Natural killer cell (primary cell): ENCODE measurements at regions of chr12 and their contacts with region 1.

Region 1: DNA sequence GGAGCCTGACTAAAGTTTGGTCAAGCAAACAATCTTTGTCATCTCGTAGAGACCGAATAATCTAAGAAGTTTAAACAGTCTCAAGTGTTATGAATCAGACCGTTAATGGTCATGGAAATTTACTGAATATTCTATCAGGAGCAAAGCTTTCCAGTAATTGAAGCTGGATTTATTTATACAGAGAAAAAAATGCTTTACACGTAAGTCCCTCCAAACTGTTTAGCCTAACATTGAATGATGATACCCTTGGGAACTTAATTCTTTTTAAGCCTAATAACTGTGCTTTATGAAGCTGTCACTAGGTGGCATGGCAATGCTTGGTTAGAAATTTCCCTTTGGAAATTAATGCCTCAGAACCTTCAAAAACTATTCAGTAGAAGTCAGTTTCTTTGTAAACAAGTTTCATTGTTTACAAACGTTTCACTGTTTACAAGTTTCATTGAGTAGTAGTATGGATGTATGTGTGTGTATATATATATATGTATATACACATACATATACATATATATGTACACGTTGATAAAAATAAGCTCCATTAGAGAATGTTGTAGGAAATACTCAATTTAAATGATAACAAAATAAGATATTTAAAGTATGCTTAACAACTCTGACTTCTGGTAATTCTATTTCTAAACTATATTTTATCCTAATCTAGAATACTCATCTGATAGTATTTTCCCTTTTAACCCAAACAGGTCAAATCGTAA is 32.1 kb downstream of the DEPDC4 start:
- DNase-seq: peak in 1 of 2 donors; percentile 58
- ATAC-seq: peak; percentile 36 to 52 (median 43)
- H3K4me3 ChIP-seq: no peak overlapping the region
- H3K4me3 Mint-ChIP-seq: no peak overlapping the region
- H3K27ac ChIP-seq: no peak overlapping the region
- H3K27ac Mint-ChIP-seq: no peak overlapping the region
- H3K4me1 ChIP-seq: no peaks in the 10 kb centered on the region
- H3K4me1 Mint-ChIP-seq: no peaks in the 10 kb centered on the region
- H3K27me3 ChIP-seq: no peaks in the 10 kb centered on the region
- H3K27me3 Mint-ChIP-seq: no peaks in the 10 kb centered on the region
- CTCF ChIP-seq: peak; percentile 75

Region 2: DNA sequence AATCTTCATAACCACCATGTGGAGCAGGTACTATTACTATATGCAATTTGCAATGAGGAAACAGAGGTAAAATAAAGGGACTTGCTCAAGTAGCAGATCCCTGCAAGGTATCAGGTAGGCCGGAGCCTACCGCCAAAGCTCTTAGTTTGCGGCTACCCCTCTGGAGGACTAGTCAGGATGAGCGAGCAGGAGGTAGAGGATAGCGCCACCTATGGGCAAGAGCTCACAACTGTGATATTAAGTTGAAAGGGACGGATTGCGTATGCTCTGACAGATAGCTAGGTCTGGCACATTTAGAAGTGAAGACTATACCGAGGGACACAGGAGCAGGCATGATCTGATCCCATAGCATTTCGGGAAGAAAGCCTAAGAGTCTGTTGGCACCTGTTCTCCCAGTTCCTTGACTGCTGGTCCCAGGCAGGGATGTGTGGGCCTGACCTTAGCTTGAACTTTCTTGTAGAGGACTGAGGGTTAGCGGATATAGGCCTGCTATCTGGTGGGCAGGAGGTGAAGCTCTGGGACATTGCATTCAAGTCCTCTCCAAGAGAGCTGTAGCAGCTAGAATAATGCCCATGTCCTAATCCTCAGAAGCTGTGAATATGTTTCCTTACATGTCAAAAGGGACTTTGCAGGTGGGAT is 170.1 kb after region 1 on chr12:
- intact Hi-C with region 1: loop called (anchors 5 kb)
- DNase-seq: peak in 1 of 2 donors; percentile 33
- ATAC-seq: peak in 1 of 3 donors; percentile 39
- H3K4me3 ChIP-seq: no peak overlapping the region
- H3K4me3 Mint-ChIP-seq: no peak overlapping the region
- H3K27ac ChIP-seq: no peak overlapping the region
- H3K27ac Mint-ChIP-seq: no peak overlapping the region
- H3K4me1 ChIP-seq: no peaks in the 10 kb centered on the region
- H3K4me1 Mint-ChIP-seq: no peaks in the 10 kb centered on the region
- H3K27me3 ChIP-seq: no peaks in the 10 kb centered on the region
- H3K27me3 Mint-ChIP-seq: peaks cover 0 to 10% of the 10 kb centered on the region in 2 donors
- CTCF ChIP-seq: no peak

Region 3: GRCh38 chr12:100554608-100555077 is 319.9 kb after region 1 on chr12:
- intact Hi-C with region 1: loop called (anchors 1 kb)
- DNase-seq: peak in 1 of 2 donors; percentile 45
- ATAC-seq: no peak
- H3K4me3 ChIP-seq: no peak overlapping the region
- H3K4me3 Mint-ChIP-seq: no peak overlapping the region
- H3K27ac ChIP-seq: no peak overlapping the region
- H3K27ac Mint-ChIP-seq: no peak overlapping the region
- H3K4me1 ChIP-seq: no peaks in the 10 kb centered on the region
- H3K4me1 Mint-ChIP-seq: no peaks in the 10 kb centered on the region
- H3K27me3 ChIP-seq: no peaks in the 10 kb centered on the region
- H3K27me3 Mint-ChIP-seq: peaks cover 0 to 2% of the 10 kb centered on the region in 2 donors
- CTCF ChIP-seq: peak; percentile 40

Region 4: DNA sequence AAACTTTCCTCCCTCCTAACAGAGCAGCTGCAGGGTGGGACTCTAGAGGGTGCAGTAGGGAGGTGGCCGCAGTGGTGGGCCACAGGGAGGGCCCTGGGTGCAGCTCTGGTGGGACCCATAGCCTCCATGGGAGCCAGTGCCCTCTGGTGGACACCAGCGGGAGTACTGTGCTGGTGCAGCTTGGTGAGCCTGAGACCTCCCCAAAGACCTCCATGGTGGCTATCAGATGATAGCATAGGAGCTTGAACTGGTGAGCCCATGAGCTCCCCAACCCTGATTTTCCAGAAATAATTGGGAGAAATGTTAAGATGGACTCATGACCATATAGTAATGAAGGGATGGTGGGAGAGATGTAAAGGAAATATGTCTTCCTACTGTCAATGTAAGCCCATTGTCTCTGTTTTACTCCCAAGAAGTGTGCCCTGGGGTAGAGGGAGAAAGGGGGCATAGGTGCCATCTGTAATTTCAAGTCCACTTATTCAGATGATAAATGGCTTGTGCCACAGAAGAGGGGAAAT is 437.4 kb after region 1 on chr12:
- intact Hi-C with region 1: loop called (anchors 10 kb)
- DNase-seq: peak in 1 of 2 donors; percentile 9
- ATAC-seq: peak in 1 of 3 donors; percentile 47
- H3K4me3 ChIP-seq: no peak overlapping the region
- H3K4me3 Mint-ChIP-seq: no peak overlapping the region
- H3K27ac ChIP-seq: no peak overlapping the region
- H3K27ac Mint-ChIP-seq: no peak overlapping the region
- H3K4me1 ChIP-seq: no peaks in the 10 kb centered on the region
- H3K4me1 Mint-ChIP-seq: no peaks in the 10 kb centered on the region
- H3K27me3 ChIP-seq: no peaks in the 10 kb centered on the region
- H3K27me3 Mint-ChIP-seq: no peaks in the 10 kb centered on the region
- CTCF ChIP-seq: no peak

Region 5: DNA sequence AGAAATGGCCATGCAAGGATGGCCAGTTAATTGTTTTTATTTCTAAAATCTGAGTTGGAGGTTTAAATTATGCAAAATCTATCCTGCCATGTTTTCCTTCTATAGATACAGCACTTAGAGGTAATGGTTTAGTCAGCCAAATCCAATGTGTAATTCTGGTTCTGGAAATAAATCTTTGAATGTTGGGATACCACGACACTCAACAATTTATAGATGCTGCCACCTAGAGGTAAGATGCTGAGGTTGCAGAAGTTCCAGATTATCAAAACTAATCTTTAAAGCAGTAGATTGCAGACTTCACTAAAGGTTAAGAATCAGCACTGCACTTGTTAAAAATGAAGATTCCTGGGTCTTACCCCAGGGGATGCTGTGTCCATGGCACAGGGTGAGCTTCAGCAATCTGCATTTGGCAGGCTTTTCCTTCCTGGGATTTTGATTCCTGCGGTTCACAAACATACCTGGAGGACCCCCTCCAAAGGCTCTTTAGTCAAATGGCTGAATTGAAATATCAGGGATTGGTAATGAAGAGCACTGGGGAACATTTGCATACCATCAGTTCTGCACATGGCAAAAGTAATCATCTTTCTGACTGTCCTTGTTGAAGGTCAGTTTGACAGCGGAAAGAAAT is 506.4 kb after region 1 on chr12:
- intact Hi-C with region 1: loop called (anchors 2 kb)
- DNase-seq: peak in 1 of 2 donors; percentile 2
- ATAC-seq: no peak
- H3K4me3 ChIP-seq: no peak overlapping the region
- H3K4me3 Mint-ChIP-seq: no peak overlapping the region
- H3K27ac ChIP-seq: no peak overlapping the region
- H3K27ac Mint-ChIP-seq: no peak overlapping the region
- H3K4me1 ChIP-seq: no peaks in the 10 kb centered on the region
- H3K4me1 Mint-ChIP-seq: no peaks in the 10 kb centered on the region
- H3K27me3 ChIP-seq: no peaks in the 10 kb centered on the region
- H3K27me3 Mint-ChIP-seq: peaks cover 3 to 7% of the 10 kb centered on the region in 2 donors
- CTCF ChIP-seq: peak; percentile 44